Activated CD4-positive, alpha-beta T cell treated with anti-CD3 and anti-CD28 coated beads, Interleukin-2, amount 10 ng/mL, durations not matched to agents 24 days and 14 days (primary cell): ENCODE measurements at regions of chr2 and their contacts with region 1.

Region 1: DNA sequence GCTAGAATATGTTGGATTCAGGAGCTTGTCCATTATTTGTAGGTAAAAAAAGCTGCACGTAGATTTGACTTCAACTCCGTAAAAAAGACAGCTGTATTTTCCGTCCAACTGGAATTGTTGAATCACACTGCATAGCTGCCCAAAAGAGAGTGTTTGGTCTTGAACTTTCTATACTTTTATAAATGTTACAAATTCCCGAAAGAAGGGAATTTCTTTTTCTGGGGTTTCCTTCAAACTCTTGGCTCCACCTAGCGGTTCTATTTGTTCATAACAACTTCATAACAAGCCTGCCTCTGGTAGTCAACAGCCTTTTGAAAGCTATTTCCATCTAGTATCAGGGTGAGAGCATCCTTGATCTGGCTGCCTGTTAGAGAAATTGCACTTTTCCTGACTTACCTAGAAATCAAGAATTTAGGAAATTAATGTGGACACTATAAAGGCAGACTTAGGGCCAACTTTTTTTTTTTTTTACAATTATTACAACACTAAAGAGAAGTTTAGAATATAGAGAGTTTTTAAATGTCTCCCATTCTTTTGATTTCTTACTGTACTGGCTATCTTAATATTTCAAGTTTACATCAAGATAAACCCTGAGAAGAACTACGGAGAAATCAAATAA is 48.1 kb downstream of the TMEM185B start:
- DNase-seq: peak; percentile 82
- H3K4me3 Mint-ChIP-seq: no peak overlapping the region
- H3K27ac Mint-ChIP-seq: peak overlapping the region; percentile 18
- H3K4me1 Mint-ChIP-seq: peaks cover 36% of the 10 kb centered on the region
- H3K27me3 Mint-ChIP-seq: no peaks in the 10 kb centered on the region

Region 2: DNA sequence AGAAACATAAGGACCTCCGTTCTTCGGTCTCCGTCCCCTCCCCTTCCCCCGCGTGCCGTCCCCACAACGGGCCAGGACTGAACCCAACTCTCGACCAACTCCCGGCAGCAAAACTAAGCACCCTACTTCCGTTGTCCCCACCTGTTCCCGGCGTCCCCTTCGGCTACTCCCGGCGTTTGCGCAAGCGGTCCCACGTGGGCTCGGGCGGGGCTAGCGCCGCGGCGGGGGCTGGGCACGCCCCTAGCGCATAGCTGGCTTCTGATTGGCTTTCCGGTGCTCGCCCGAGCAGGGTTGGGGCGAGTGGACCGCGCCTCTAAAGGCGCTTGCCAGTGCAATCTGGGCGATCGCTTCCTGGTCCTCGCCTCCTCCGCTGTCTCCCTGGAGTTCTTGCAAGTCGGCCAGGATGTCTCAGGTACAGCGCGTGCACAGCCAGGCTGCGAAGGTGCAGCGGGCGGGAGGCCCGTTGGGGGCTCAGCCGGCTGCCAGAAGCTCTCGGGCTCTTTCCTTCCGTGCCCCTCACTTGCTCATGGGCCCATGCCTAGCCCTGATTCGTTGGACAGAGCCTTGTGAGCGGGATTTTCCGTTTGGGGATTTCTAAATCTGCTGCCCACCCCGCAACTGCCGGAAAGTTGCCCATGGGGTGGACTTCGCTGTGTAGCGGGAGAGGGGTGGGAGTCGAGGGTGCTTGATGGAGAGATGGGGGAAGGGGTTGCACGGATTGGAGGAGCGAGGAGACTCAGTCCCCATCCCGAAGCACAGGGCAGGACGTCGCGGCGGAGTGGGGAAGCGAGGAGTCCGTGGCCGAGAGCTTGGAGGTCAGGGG is 808.2 kb before region 1 on chr2 and contains the starts of genes C2orf76 and DBI:
- intact Hi-C with region 1: loop called (anchors 5 kb)
- DNase-seq: peak; percentile 98
- H3K4me3 Mint-ChIP-seq: peak within 1 kb of the TSS; percentile 98
- H3K27ac Mint-ChIP-seq: peak within 1 kb of the TSS; percentile 97
- H3K4me1 Mint-ChIP-seq: peaks cover 35% of the 10 kb centered on the region
- H3K27me3 Mint-ChIP-seq: no peaks in the 10 kb centered on the region
- total RNA-seq, gene C2orf76: 10.2 and 11.5 TPM in 2 replicates
- total RNA-seq, gene DBI: 139 and 145 TPM in 2 replicates

Region 3: GRCh38 chr2:119753041-119753929 is 421.8 kb before region 1 on chr2:
- intact Hi-C with region 1: loop called (anchors 1 kb)
- DNase-seq: peak; percentile 81
- H3K4me3 Mint-ChIP-seq: no peak overlapping the region
- H3K27ac Mint-ChIP-seq: no peak overlapping the region
- H3K4me1 Mint-ChIP-seq: peaks cover 11% of the 10 kb centered on the region
- H3K27me3 Mint-ChIP-seq: peaks cover 18% of the 10 kb centered on the region

Region 4: GRCh38 chr2:119862127-119862889 is 312.8 kb before region 1 on chr2:
- intact Hi-C with region 1: loop called (anchors 5 kb)
- DNase-seq: peak; percentile 64
- H3K4me3 Mint-ChIP-seq: peak overlapping the region; percentile 56
- H3K27ac Mint-ChIP-seq: peak overlapping the region; percentile 62
- H3K4me1 Mint-ChIP-seq: peaks cover 40% of the 10 kb centered on the region
- H3K27me3 Mint-ChIP-seq: no peaks in the 10 kb centered on the region

Region 5: DNA sequence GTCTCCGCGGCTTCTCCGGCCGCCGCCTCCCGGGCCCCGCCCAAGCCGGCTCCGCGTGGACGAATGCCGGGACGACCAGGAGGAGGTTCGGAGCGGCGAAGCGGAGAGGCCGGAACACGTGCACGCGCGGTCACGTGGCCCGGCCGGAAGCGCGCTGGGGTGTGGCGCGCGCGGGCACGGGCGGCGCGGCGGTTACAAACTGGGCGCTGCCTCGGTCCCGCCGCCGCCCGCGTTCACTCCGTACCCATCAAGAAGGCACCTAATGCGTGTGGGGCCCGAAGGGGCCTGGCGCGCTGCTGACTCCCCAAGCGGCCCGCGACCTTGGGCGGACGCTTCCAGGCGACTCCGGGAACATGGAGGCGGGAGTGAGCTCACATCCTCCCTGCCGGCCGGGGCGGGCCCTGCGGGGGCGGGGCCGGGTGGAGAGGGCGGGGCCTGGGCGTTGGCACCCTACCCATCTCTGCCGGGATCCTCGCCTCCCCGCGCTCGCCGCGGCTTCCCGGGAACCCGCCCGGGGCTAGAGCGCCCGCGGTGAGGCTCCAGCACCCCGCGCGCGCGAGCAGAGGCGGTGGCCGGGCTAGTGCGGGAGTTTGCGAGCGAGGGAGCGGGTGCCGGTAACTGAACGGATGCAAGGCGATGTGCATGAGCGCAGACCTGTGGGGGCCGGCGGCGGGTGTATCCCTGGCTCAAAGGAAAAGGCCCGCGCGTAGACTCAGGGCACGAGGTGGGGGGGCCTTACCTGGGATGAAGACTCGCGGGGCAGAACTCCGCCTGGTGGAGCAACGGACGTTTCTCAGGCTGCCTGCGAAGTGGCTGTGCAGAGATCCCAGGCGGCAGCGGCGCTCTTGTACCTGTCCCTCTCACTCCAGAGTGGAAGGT is 48.2 kb after region 1 on chr2 and contains the start of gene TMEM185B:
- intact Hi-C with region 1: loop called (anchors 2 kb)
- DNase-seq: peak; percentile 98
- H3K4me3 Mint-ChIP-seq: peak within 1 kb of the TSS; percentile 87
- H3K27ac Mint-ChIP-seq: peak within 1 kb of the TSS; percentile 92
- H3K4me1 Mint-ChIP-seq: peaks cover 59% of the 10 kb centered on the region
- H3K27me3 Mint-ChIP-seq: no peaks in the 10 kb centered on the region
- total RNA-seq, gene TMEM185B: 44.3 and 45.8 TPM in 2 replicates

Region 6: DNA sequence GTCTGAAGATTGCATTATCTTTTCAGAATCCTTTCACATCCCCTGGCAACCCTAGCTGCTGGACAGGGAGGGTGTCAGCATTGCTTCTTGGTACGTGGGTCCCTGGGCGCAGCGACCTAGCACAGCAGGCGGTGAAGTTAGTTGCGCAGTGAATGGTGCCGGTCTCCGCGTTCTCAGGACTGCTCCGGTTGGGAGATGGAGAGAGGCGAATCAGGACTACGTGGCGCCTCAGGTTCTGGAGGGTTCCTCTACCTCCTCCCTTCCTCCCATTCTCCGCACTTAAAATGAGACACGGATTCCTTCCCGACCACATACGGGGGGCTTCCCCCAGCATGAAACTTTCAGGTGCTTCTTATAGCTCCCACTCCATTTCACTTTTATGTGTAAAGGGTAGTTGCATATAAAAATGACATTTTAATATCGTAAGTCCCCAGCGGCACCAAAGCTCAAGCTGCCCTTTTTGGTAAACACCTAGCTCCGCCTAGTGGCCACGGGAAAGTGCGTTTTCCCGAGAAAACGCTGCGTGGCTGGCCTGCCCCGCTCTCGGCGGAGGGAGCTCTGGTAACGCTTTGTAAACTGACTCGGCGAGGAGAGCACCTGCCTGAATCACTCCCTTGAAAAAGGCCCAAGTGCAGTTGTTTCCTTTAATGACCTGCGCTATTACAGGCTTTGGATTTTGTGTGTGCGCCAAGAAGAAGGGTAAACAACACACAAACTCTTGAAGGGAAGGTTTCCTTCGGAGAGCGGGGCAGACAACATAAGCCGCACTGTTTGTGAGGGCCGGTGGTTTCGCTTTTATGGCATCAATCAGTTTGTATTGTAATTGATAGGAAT is 138.0 kb after region 1 on chr2:
- intact Hi-C with region 1: loop called (anchors 1 kb)
- DNase-seq: peak; percentile 94
- H3K4me3 Mint-ChIP-seq: peak overlapping the region; percentile 80
- H3K27ac Mint-ChIP-seq: peak overlapping the region; percentile 65
- H3K4me1 Mint-ChIP-seq: peaks cover 41% of the 10 kb centered on the region
- H3K27me3 Mint-ChIP-seq: no peaks in the 10 kb centered on the region